ENCODE measurements at regions of chr12 and their contacts with region 1.

Region 1: GRCh38 chr12:109110988-109111495 is 5.3 kb upstream of the ACACB start:
- DNase-seq: peak; percentile 91
- H3K4me3 ChIP-seq: peak overlapping the region; percentile 58 to 80
- H3K27ac ChIP-seq: peak overlapping the region; percentile 95 to 97
- H3K4me1 ChIP-seq: peaks cover 9 to 18% of the 10 kb centered on the region in 2 experiments
- H3K27me3 ChIP-seq: no peaks in the 10 kb centered on the region
- CTCF ChIP-seq: no peak
- EP300 ChIP-seq: peak; percentile 12 to 19; a peak in 1 of 4 replicates
- RAD21 ChIP-seq: no peak

Region 2: GRCh38 chr12:109093022-109093918 is 17.8 kb before region 1 on chr12 and contains the start of gene ALKBH2:
- CTCF ChIA-PET with region 1: interaction called, 10 read pairs
- POLR2A ChIA-PET with region 1: interaction called, 3 read pairs
- DNase-seq: peak; percentile 90
- H3K4me3 ChIP-seq: peak within 1 kb of the TSS; percentile 60 to 77
- H3K27ac ChIP-seq: peak within 1 kb of the TSS; percentile 54 to 60; a peak in 3 of 4 replicates
- H3K4me1 ChIP-seq: peaks cover 0 to 22% of the 10 kb centered on the region in 2 experiments; a peak in 1 of 4 replicates
- H3K27me3 ChIP-seq: no peaks in the 10 kb centered on the region
- CTCF ChIP-seq: peak; percentile 91
- EP300 ChIP-seq: peak in 1 of 2 experiments; percentile 58; a peak in 2 of 4 replicates
- RAD21 ChIP-seq: peak; percentile 90
- polyA plus RNA-seq, gene ALKBH2: 47.3 and 53.7 TPM in 2 replicates

Region 3: GRCh38 chr12:109098183-109099050 is 12.6 kb before region 1 on chr12:
- CTCF ChIA-PET with region 1: interaction called, 26 read pairs
- POLR2A ChIA-PET with region 1: interaction called, 3 read pairs
- DNase-seq: no peak
- H3K4me3 ChIP-seq: peak overlapping the region; percentile 66 to 70
- H3K27ac ChIP-seq: peak overlapping the region; percentile 77 to 80; a peak in 3 of 4 replicates
- H3K4me1 ChIP-seq: peaks cover 5% of the 10 kb centered on the region in 2 experiments; a peak in 2 of 4 replicates
- H3K27me3 ChIP-seq: no peaks in the 10 kb centered on the region
- CTCF ChIP-seq: no peak
- EP300 ChIP-seq: no peak
- RAD21 ChIP-seq: no peak

Region 4: GRCh38 chr12:109124878-109125648 is 14.0 kb after region 1 on chr12:
- CTCF ChIA-PET with region 1: interaction called, 36 read pairs
- POLR2A ChIA-PET with region 1: no interaction called
- DNase-seq: no peak
- H3K4me3 ChIP-seq: no peak overlapping the region
- H3K27ac ChIP-seq: no peak overlapping the region
- H3K4me1 ChIP-seq: no peaks in the 10 kb centered on the region
- H3K27me3 ChIP-seq: no peaks in the 10 kb centered on the region
- CTCF ChIP-seq: no peak
- EP300 ChIP-seq: no peak
- RAD21 ChIP-seq: no peak

Region 5: DNA sequence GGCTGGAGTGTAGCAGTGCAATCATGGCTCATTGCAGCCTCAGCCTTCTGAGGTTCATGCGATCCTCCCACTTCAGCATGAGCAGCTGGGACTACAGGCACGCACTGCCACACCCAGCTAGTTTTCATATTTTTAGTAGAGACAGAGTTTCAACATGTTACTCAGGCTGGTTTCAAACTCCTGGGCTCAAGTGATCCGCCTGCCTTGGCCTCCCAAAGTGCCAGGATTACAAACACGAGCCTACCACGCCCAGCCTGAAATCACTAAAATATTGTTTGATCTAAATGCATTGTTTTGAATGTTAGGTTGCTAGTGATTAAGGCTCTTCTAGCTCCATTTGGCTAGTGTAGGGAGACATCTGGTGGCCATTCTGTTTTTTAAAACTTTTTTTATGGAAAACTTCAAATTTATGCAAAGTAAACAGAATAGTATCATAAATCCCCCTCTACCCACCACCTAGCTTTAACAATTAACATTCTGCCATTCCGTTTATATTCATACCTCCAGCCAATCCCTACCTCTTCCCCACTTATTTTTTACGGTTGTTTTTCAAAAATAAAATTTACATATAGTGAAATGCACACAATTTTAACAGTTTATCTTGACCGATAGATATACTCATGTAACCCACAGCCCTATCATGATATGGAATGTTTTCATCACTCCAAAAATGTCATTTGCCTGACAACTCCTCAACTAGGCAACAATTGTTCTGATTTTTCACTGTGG is 274.5 kb after region 1 on chr12:
- CTCF ChIA-PET with region 1: interaction called, 86 read pairs
- POLR2A ChIA-PET with region 1: interaction called, 3 read pairs
- DNase-seq: peak; percentile 51
- H3K4me3 ChIP-seq: peak overlapping the region in 1 of 2 experiments; percentile 38; a peak in 1 of 4 replicates
- H3K27ac ChIP-seq: no peak overlapping the region
- H3K4me1 ChIP-seq: no peaks in the 10 kb centered on the region
- H3K27me3 ChIP-seq: peaks cover 6% of the 10 kb centered on the region; the same call in 1 of the 2 replicates
- CTCF ChIP-seq: peak; percentile 71
- EP300 ChIP-seq: no peak
- RAD21 ChIP-seq: peak; percentile 98

Measured in SK-N-SH (cell line).